Heart right ventricle (tissue), 16 donors: ENCODE measurements at regions of chr6 and their contacts with region 1.

Region 1: GRCh38 chr6:108835218-108835850 is 12.9 kb upstream of the ARMC2 start:
- DNase-seq: peak; percentile 88 to 89
- ATAC-seq: peak; percentile 89 to 96 (median 94)
- H3K4me3 ChIP-seq: no peak overlapping the region
- H3K27ac ChIP-seq: peak overlapping the region in 3 of 10 donors; percentile 8 to 39 (median 22)
- H3K4me1 ChIP-seq: peaks cover 0 to 32% (median 0%) of the 10 kb centered on the region in 9 donors
- H3K27me3 ChIP-seq: no peaks in the 10 kb centered on the region
- CTCF ChIP-seq: peak; percentile 85 to 97 (median 95)

Region 2: DNA sequence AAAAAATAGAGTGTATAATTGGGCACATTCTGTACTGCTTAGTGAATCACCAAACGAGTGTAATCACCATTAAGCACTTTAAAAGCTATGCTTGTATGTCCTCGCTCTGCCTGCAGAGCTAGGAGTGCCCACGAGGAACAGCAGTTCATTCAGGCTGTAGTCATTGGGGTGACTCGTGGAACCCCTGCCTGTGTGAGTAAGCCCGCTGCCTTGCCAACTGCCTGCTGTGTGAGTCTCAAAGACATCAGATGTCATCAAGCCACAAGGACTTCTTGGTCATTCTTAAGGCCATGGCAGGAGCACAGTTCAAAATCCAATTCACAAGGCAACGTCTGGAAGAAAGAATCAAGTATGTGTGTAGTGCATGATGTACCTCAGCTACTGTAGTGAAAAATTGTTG is 214.2 kb before region 1 on chr6:
- intact Hi-C with region 1: no loop called
- DNase-seq: no peak
- ATAC-seq: peak in 3 of 8 donors; percentile 24 to 48 (median 42)
- H3K4me3 ChIP-seq: no peak overlapping the region
- H3K27ac ChIP-seq: peak overlapping the region in 2 of 10 donors; percentile 25 to 86
- H3K4me1 ChIP-seq: peaks cover 21 to 100% (median 95%) of the 10 kb centered on the region in 9 donors
- H3K27me3 ChIP-seq: no peaks in the 10 kb centered on the region
- CTCF ChIP-seq: no peak

Region 3: DNA sequence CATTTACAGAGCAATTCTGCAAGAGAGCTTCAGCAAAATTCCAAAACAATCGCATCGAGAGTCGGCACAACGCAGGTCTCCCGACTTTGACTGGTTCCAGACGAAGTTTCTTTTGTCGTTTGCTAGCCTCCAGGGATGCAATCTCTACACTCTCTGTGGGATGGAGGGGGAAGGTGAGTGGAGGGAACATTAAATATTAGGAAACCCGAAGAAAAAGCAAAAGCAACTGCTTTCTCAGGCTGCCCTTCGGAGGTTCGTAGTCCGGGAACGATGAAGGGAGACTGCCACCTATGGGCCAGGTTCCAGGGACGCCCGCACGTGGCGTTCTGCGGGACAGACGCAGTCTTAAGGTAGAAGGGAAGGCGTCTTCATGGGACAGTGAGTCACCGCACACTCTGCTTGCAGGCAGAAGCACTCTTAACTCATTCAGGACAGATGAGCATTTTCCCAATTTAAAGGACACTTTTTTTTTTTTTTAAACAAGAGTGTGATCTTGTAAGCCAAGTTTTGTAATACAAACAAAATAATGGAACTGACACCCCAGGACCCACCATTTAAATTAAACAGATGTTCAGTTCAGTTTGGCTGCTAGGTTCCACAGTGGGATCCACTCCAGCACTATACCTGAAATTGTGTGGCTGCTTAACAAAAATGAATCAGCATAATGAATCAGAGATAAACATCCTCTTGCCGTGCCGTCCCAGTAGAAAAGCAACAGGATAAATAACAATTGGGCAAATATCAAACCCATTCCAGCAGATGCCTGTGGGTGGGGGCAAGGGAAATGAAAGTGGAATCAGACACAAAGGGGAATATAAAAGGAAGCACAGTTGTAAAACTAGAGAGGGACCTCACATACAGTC is 52.9 kb before region 1 on chr6:
- intact Hi-C with region 1: loop called in 5 of 10 experiments (anchors 2 to 10 kb)
- DNase-seq: peak; percentile 82
- ATAC-seq: peak; percentile 89 to 96 (median 93)
- H3K4me3 ChIP-seq: peak overlapping the region in 9 of 10 donors; percentile 31 to 64 (median 55)
- H3K27ac ChIP-seq: peak overlapping the region in 5 of 10 donors; percentile 5 to 42 (median 33)
- H3K4me1 ChIP-seq: peaks cover 0 to 21% (median 7%) of the 10 kb centered on the region in 9 donors
- H3K27me3 ChIP-seq: no peaks in the 10 kb centered on the region
- CTCF ChIP-seq: peak; percentile 41 to 93 (median 82)

Region 4: GRCh38 chr6:108883172-108883571 is 47.8 kb after region 1 on chr6:
- intact Hi-C with region 1: loop called in 2 of 10 experiments (anchors 5 to 10 kb)
- DNase-seq: no peak
- ATAC-seq: no peak
- H3K4me3 ChIP-seq: no peak overlapping the region
- H3K27ac ChIP-seq: no peak overlapping the region
- H3K4me1 ChIP-seq: peaks cover 1 to 13% (median 6%) of the 10 kb centered on the region in 9 donors
- H3K27me3 ChIP-seq: no peaks in the 10 kb centered on the region
- CTCF ChIP-seq: no peak